ENCODE measurements at regions of chr2 and their contacts with region 1.

Region 1: DNA sequence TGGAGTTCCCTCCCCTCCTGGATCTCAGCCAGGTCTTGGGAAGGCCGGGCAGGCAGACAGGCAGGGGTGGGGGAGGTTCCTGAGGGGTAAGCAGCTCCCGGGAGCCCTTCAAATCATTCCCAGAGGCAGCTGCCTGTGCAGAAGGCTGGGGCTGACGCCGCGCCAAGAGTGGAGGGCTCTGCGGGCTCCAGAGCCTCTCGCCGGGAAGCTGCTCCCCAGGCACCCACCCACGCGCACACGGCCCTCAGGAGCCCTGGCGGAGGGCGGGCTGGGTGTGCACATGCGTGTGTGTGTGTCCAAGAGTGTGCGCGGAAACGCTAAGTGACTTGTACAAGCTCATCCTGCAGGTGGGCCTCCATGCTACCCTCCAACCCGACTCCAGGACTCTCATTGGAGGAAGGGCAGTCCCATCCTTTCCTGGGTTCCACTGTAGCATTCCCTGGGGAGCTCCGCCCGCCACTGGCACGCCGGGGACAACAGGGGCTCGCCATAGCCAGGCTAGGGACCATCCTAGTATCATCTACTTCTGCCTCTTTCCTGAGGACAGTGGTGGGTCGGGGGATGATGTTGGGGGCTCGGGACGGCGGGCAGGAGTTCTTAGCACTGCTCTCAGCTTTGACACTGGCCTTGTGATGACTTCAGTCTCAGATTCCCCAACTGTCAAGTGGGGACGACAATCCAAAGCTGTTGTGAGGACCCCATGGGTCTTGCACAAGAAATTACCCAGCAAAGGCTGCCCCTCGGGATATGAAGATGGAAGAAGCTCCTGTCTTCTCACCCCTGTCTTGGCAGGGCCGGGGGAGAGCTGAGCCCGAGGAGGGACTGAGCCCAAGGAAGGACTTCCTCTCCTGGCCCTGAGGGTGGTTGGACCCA is 50.3 kb downstream of the INHBB start:
- DNase-seq: peak in 1 of 2 experiments; percentile 64
- H3K4me3 ChIP-seq: no peak overlapping the region
- H3K27ac ChIP-seq: peak overlapping the region; percentile 96
- H3K4me1 ChIP-seq: peaks cover 57% of the 10 kb centered on the region
- H3K27me3 ChIP-seq: no peaks in the 10 kb centered on the region
- CTCF ChIP-seq: no peak

Region 2: GRCh38 chr2:120343433-120344105 is 52.7 kb before region 1 on chr2:
- CTCF ChIA-PET with region 1: interaction called, 17 read pairs
- POLR2A ChIA-PET with region 1: interaction called, 16 read pairs
- intact Hi-C with region 1: loop called (anchors 1 kb)
- DNase-seq: peak; percentile 80 to 87
- H3K4me3 ChIP-seq: peak overlapping the region; percentile 77; the same call in 1 of the 2 replicates
- H3K27ac ChIP-seq: no peak overlapping the region
- H3K4me1 ChIP-seq: peaks cover 21% of the 10 kb centered on the region
- H3K27me3 ChIP-seq: 0 out of 2 replicates have a peak, but pooled peaks cover 7% of the 10 kb centered on the region
- CTCF ChIP-seq: peak; percentile 96

Region 3: DNA sequence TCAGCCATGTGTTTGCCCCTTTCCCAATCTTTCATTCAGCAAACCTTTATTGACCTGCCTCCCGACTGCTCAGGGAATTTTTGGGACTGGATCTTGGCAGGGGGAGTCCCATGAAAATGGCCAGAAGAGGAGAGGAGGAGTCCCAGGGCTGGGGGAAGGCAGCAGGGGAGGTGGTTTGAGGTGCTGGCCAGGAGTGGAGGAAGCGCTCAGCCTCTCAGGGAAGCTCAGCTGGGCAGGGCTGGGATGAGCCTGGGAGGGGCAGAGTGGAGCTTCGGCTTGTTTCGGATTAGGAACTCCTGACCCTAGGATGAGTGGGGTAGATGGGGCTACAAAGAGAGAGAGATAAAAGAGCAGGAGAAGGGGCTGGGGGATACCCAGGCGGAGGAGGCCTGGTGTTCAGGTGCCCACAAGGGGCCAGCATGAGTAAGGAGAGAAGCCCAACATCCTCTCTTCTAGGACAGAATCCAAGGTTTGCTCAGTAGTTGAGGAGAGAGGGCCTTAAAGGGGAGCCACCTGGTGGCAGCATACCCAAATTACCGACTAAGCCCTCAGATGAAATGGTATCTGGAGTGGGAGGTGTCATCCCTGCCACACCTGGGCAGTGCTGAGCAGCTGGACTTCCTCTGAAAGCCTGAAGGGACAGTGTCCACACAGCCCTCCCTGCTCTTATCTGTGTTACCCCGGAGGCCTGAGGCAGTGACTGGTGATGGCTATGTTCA is 40.8 kb after region 1 on chr2:
- CTCF ChIA-PET with region 1: interaction called, 3 read pairs
- POLR2A ChIA-PET with region 1: interaction called, 3 read pairs
- intact Hi-C with region 1: loop called (anchors 1 kb)
- DNase-seq: peak; percentile 56 to 77
- H3K4me3 ChIP-seq: no peak overlapping the region
- H3K27ac ChIP-seq: no peak overlapping the region
- H3K4me1 ChIP-seq: peaks cover 22% of the 10 kb centered on the region
- H3K27me3 ChIP-seq: no peaks in the 10 kb centered on the region
- CTCF ChIP-seq: peak; percentile 84

Region 4: DNA sequence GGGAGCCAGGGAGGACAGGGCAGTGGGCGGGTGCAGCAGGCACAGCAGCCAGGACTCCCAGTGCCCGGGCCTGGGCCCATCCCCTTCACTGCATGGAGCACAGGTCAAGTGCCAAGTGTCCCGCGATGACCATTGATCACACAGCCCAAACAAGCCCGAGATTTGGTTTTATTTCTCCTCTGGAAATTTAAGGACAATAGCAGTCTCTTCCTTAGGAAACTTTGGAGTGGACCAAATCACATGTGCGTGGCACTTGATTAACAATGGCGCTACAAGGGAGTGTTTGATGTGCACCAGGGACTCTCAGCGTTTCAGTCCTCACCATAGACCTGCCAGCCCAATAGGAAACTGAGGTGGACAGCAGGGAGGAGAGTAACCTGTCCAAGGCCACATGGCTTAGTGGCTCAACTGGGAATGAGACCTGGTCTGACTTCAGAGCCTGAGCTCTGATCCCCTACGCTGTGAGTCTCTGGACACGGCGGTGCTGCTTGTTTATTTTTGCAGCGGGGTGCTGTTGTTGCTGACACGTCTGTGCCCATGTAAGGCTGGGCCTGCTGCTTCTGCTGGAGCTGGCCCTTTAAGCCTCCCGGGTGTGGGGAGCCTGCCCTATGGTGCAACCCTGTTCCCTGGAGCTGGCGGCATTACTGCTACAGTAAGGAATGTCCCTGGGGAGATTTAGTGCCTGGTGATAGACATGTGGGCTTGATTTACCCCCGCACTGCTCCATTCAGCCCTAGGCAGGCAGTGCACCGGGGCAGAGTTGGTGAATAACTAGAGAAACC is 143.9 kb after region 1 on chr2:
- CTCF ChIA-PET with region 1: no interaction called
- POLR2A ChIA-PET with region 1: no interaction called
- intact Hi-C with region 1: loop called (anchors 1 kb)
- DNase-seq: peak; percentile 86 to 95
- H3K4me3 ChIP-seq: peak overlapping the region; percentile 11; the same call in 1 of the 2 replicates
- H3K27ac ChIP-seq: peak overlapping the region; percentile 83
- H3K4me1 ChIP-seq: peaks cover 44% of the 10 kb centered on the region
- H3K27me3 ChIP-seq: no peaks in the 10 kb centered on the region
- CTCF ChIP-seq: no peak

Region 5: GRCh38 chr2:120625865-120626560 is 229.8 kb after region 1 on chr2:
- CTCF ChIA-PET with region 1: no interaction called
- POLR2A ChIA-PET with region 1: no interaction called
- intact Hi-C with region 1: loop called (anchors 2 kb)
- DNase-seq: peak; percentile 86 to 87
- H3K4me3 ChIP-seq: no peak overlapping the region
- H3K27ac ChIP-seq: no peak overlapping the region
- H3K4me1 ChIP-seq: peaks cover 28% of the 10 kb centered on the region
- H3K27me3 ChIP-seq: no peaks in the 10 kb centered on the region
- CTCF ChIP-seq: no peak